A549 (cell line): ENCODE measurements at regions of chr11 and their contacts with region 1.

Region 1: DNA sequence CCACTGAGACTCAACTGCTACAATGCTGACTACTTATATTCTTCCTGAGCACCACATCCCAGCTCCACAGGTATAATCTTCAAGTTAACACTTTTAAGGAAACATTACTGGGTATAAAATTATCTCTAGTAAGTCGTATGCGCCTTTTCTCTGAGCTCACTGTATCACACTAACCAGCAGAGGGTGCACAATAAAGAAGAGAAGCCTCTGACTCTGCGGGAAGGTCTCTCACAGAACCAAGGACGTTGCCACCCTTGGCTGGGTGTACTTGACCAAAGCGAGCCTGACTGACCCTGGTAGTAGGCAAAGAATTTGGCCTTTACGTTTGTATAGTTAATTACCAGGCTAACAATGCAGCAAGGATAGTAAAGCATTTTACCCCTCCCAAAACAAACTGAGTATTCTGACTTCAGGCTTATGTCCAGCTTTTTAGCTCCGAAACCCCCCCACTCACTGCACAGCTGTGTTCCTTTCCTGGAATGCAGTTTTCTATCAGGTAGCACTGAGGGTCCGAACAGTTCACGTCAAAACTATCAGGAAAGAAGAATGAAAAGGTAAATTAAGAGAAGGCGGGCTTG is at the start of gene BTBD18:
- DNase-seq: peak; percentile 57 to 76
- ATAC-seq: peak; percentile 96
- H3K4me3 ChIP-seq: no peak within 1 kb of the TSS
- H3K27ac ChIP-seq: peak within 1 kb of the TSS in 1 of 2 experiments; percentile 30; a peak in 1 of 6 replicates
- H3K4me1 ChIP-seq: peaks cover 4% of the 10 kb centered on the region; the same call in 1 of the 3 replicates
- CTCF ChIP-seq: peak; percentile 65
- EP300 ChIP-seq: no peak
- POLR2A ChIP-seq: no peak
- RAD21 ChIP-seq: peak; percentile 67 to 68
- polyA plus RNA-seq, gene BTBD18: not detected in 2 replicates

Region 2: GRCh38 chr11:57729479-57729878 is 22.3 kb before region 1 on chr11:
- CTCF ChIA-PET with region 1: interaction called, 10 read pairs
- POLR2A ChIA-PET with region 1: no interaction called
- DNase-seq: no peak
- ATAC-seq: no peak
- H3K4me3 ChIP-seq: no peak overlapping the region
- H3K27ac ChIP-seq: no peak overlapping the region
- H3K4me1 ChIP-seq: no peaks in the 10 kb centered on the region
- CTCF ChIP-seq: no peak
- EP300 ChIP-seq: no peak
- POLR2A ChIP-seq: no peak
- RAD21 ChIP-seq: no peak

Region 3: DNA sequence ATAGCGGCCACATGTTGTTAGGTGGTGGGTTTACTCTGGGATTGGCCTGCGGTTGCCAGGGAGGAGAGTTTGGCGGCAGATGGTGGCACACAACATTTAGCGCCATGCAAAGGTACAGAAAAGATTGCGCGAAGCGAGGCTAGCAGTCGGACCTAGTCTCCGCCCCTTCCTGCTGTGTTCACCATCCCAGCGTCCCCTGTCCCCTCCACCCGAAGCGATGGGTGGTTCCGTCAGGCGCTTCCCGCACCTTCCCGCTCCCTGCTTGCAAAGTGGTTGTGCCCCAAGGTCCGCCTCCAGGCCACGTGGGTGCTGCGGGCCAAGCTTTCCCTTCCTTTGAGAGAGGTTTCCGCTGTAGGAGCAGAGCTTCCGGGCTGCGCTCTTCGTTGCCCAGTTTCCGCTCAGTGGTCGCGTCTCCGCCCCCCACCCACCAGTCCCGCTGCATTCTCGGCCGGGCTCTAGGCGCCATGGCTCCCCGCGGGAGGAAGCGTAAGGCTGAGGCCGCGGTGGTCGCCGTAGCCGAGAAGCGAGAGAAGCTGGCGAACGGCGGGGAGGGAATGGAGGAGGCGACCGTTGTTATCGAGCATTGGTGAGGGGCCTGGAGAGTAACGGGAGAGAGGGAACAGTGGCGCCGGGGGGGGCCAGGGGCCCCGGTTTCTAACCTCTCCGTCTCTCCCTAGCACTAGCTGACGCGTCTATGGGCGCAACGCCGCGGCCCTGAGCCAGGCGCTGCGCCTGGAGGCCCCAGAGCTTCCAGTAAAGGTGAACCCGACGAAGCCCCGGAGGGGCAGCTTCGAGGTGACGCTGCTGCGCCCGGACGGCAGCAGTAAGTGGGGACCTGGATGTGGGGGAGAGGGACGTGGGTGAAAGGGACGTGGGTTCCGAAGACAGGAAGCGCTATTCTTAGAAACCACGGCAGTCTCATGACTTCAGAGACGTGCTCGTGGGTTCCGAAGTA is 10.4 kb before region 1 on chr11 and contains the start of gene SELENOH:
- CTCF ChIA-PET with region 1: interaction called, 24 read pairs
- POLR2A ChIA-PET with region 1: interaction called, 8 read pairs
- DNase-seq: peak; percentile 94 to 98
- ATAC-seq: peak; percentile 97 to 98
- H3K4me3 ChIP-seq: peak within 1 kb of the TSS; percentile 88
- H3K27ac ChIP-seq: peak within 1 kb of the TSS; percentile 90 to 95
- H3K4me1 ChIP-seq: peaks cover 14% of the 10 kb centered on the region
- CTCF ChIP-seq: no peak
- EP300 ChIP-seq: no peak
- POLR2A ChIP-seq: peak; percentile 53
- RAD21 ChIP-seq: peak in 1 of 2 experiments; percentile 18; a peak in 2 of 5 replicates
- polyA plus RNA-seq, gene SELENOH: 99.7 and 115 TPM in 2 replicates

Region 4: GRCh38 chr11:57778318-57779037 is 26.7 kb after region 1 on chr11:
- CTCF ChIA-PET with region 1: interaction called, 17 read pairs
- POLR2A ChIA-PET with region 1: interaction called, 3 read pairs
- DNase-seq: peak; percentile 88 to 94
- ATAC-seq: peak; percentile 95 to 96
- H3K4me3 ChIP-seq: peak overlapping the region; percentile 31
- H3K27ac ChIP-seq: peak overlapping the region; percentile 83 to 88
- H3K4me1 ChIP-seq: peaks cover 92% of the 10 kb centered on the region
- CTCF ChIP-seq: no peak
- EP300 ChIP-seq: no peak
- POLR2A ChIP-seq: no peak
- RAD21 ChIP-seq: no peak; a peak in 1 of 5 replicates

Region 5: GRCh38 chr11:58513747-58514367 is 762.1 kb after region 1 on chr11:
- CTCF ChIA-PET with region 1: interaction called, 15 read pairs
- POLR2A ChIA-PET with region 1: no interaction called
- DNase-seq: peak; percentile 33 to 75
- ATAC-seq: peak; percentile 95 to 98
- H3K4me3 ChIP-seq: no peak overlapping the region
- H3K27ac ChIP-seq: no peak overlapping the region
- H3K4me1 ChIP-seq: no peaks in the 10 kb centered on the region
- CTCF ChIP-seq: peak; percentile 78
- EP300 ChIP-seq: no peak
- POLR2A ChIP-seq: no peak
- RAD21 ChIP-seq: peak; percentile 83 to 86